CD8-positive, alpha-beta T cell (primary cell): ENCODE measurements at regions of chr1 and their contacts with region 1.

Region 1: GRCh38 chr1:63615768-63616420 is 22.7 kb downstream of the PGM1 start:
- DNase-seq: peak in 7 of 9 experiments; percentile 40 to 76 (median 68)
- ATAC-seq: peak; percentile 75
- H3K4me3 ChIP-seq: no peak overlapping the region
- H3K4me3 Mint-ChIP-seq: no peak overlapping the region
- H3K27ac ChIP-seq: no peak overlapping the region
- H3K27ac Mint-ChIP-seq: no peak overlapping the region
- H3K4me1 ChIP-seq: no peaks in the 10 kb centered on the region
- H3K4me1 Mint-ChIP-seq: peaks cover 4% of the 10 kb centered on the region
- H3K27me3 ChIP-seq: no peaks in the 10 kb centered on the region
- H3K27me3 Mint-ChIP-seq: no peaks in the 10 kb centered on the region
- CTCF ChIP-seq: peak; percentile 77

Region 2: DNA sequence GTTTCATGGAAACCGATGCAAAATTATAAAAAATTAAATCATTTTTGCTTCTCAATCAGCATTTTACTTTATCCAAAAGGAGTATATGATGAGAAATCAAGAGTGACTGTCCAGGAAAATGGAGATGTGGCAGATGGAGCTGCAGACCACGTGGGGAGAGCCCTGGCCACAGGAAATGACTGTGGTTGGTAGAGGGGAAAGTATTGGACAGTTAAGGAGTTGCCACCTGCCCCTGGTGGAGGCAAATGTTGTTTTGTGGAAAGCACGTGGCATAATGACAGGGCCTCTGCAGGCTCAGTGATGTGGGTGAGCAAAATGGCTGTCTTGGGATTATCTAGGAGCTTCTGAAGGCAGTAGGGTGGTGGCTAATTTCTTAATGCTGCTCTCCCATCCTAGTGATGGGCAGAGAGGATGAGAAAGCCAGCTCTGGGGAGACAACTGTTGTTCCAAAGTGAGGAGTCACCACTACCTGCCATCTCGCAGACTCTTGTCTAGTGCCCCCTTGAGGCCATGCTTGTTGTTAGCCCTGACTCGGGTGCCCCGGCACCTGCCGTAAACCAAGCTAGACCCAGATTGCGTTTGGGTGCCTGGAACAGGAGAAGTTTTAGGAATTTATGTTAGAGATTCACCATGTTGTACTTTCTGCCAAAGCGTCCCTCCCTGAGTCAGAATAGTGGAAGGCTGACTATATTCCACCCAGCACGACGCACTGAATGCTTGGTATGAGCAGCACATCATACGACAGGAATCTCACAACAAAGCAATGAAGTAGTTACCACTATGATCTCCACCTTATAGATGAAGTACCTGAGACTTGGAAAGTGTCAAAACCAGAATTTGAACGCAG is 301.9 kb after region 1 on chr1:
- CTCF ChIA-PET with region 1: interaction called, 5 read pairs
- POLR2A ChIA-PET with region 1: no interaction called
- intact Hi-C with region 1: loop called (anchors 2 to 5 kb)
- DNase-seq: peak in 1 of 9 experiments; percentile 4
- ATAC-seq: no peak
- H3K4me3 ChIP-seq: no peak overlapping the region
- H3K4me3 Mint-ChIP-seq: no peak overlapping the region
- H3K27ac ChIP-seq: no peak overlapping the region
- H3K27ac Mint-ChIP-seq: no peak overlapping the region
- H3K4me1 ChIP-seq: no peaks in the 10 kb centered on the region
- H3K4me1 Mint-ChIP-seq: no peaks in the 10 kb centered on the region
- H3K27me3 ChIP-seq: no peaks in the 10 kb centered on the region
- H3K27me3 Mint-ChIP-seq: no peaks in the 10 kb centered on the region
- CTCF ChIP-seq: no peak

Region 3: DNA sequence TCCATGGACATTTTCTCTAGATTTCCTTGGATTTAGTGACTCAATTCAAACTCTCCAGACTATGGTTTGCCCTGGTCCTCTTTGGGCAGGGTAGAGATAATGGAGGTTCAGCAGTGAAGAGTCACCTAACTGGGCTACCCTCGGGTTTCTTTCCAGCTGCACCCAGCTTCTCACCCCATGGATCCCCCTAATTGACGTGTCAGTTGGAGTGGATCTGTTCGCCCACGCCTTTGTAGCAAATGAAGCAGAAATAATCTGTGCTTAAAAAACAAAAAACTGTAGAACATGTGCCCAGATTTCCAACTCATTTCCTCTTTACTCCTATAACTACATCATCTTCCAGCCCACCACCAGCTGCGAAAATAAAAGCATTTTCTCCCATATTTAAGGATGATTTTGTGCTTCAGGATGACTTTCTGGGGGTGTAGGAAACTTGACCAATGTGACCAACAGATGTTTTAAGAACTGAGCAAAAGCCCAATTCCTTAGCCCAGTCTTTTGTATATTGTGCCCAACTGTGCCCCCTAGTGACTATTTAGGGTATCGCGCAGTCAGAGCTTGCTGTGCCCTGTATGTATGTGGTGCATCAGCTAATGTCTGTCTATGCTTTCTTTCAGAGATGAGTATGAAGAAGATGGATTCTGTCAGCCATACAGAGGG is 521.0 kb after region 1 on chr1:
- CTCF ChIA-PET with region 1: interaction called, 57 read pairs
- POLR2A ChIA-PET with region 1: no interaction called
- intact Hi-C with region 1: loop called (anchors 1 kb)
- DNase-seq: peak; percentile 26 to 72 (median 60)
- ATAC-seq: peak; percentile 63
- H3K4me3 ChIP-seq: no peak overlapping the region
- H3K4me3 Mint-ChIP-seq: no peak overlapping the region
- H3K27ac ChIP-seq: no peak overlapping the region
- H3K27ac Mint-ChIP-seq: no peak overlapping the region
- H3K4me1 ChIP-seq: no peaks in the 10 kb centered on the region
- H3K4me1 Mint-ChIP-seq: no peaks in the 10 kb centered on the region
- H3K27me3 ChIP-seq: no peaks in the 10 kb centered on the region
- H3K27me3 Mint-ChIP-seq: peaks cover 5% of the 10 kb centered on the region
- CTCF ChIP-seq: peak; percentile 71